Activated CD4-positive, alpha-beta T cell treated with anti-CD3 and anti-CD28 coated beads for 36 hours (primary cell): ENCODE measurements at regions of chr22 and their contacts with region 1.

Region 1: GRCh38 chr22:32796865-32797573 is 4.5 kb upstream of the TIMP3 start:
- DNase-seq: peak; percentile 81
- ATAC-seq: peak; percentile 95
- H3K4me3 Mint-ChIP-seq: no peak overlapping the region
- H3K27ac Mint-ChIP-seq: no peak overlapping the region
- H3K4me1 Mint-ChIP-seq: peaks cover 2% of the 10 kb centered on the region
- H3K27me3 Mint-ChIP-seq: peaks cover 37% of the 10 kb centered on the region

Region 2: DNA sequence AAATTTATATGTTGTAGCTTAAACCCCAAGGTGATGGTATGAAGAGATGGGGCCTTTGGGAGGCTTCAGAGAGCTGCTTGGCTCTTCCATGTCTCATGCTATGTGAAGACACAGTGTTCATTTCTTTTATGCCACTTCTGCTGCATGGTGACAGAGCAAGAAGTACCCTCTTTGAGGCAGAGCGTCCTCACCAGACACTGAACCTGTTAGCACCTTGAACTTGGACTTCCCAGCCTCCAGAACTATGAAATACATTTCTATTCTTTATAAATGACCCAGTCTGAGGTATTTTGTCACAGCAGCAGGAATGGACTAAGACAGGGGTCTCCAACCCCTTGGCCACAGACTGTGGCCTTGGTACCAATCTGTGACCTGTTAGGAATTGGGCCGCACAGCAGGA is 142.0 kb before region 1 on chr22:
- CTCF ChIA-PET with region 1: interaction called, 106 read pairs
- POLR2A ChIA-PET with region 1: interaction called, 3 read pairs
- intact Hi-C with region 1: loop called (anchors 1 kb)
- DNase-seq: no peak
- ATAC-seq: no peak
- H3K4me3 Mint-ChIP-seq: no peak overlapping the region
- H3K27ac Mint-ChIP-seq: no peak overlapping the region
- H3K4me1 Mint-ChIP-seq: no peaks in the 10 kb centered on the region
- H3K27me3 Mint-ChIP-seq: peaks cover 10% of the 10 kb centered on the region

Region 3: GRCh38 chr22:32660292-32660691 is 136.7 kb before region 1 on chr22:
- CTCF ChIA-PET with region 1: interaction called, 106 read pairs
- POLR2A ChIA-PET with region 1: interaction called, 3 read pairs
- intact Hi-C with region 1: loop called (anchors 1 kb)
- DNase-seq: peak; percentile 74
- ATAC-seq: peak; percentile 30
- H3K4me3 Mint-ChIP-seq: no peak overlapping the region
- H3K27ac Mint-ChIP-seq: no peak overlapping the region
- H3K4me1 Mint-ChIP-seq: no peaks in the 10 kb centered on the region
- H3K27me3 Mint-ChIP-seq: peaks cover 10% of the 10 kb centered on the region

Region 4: GRCh38 chr22:32810561-32811004 is 13.6 kb after region 1 on chr22:
- CTCF ChIA-PET with region 1: interaction called, 12 read pairs
- POLR2A ChIA-PET with region 1: no interaction called
- intact Hi-C with region 1: no loop called
- DNase-seq: no peak
- ATAC-seq: no peak
- H3K4me3 Mint-ChIP-seq: no peak overlapping the region
- H3K27ac Mint-ChIP-seq: no peak overlapping the region
- H3K4me1 Mint-ChIP-seq: no peaks in the 10 kb centered on the region
- H3K27me3 Mint-ChIP-seq: peaks cover 10% of the 10 kb centered on the region

Region 5: DNA sequence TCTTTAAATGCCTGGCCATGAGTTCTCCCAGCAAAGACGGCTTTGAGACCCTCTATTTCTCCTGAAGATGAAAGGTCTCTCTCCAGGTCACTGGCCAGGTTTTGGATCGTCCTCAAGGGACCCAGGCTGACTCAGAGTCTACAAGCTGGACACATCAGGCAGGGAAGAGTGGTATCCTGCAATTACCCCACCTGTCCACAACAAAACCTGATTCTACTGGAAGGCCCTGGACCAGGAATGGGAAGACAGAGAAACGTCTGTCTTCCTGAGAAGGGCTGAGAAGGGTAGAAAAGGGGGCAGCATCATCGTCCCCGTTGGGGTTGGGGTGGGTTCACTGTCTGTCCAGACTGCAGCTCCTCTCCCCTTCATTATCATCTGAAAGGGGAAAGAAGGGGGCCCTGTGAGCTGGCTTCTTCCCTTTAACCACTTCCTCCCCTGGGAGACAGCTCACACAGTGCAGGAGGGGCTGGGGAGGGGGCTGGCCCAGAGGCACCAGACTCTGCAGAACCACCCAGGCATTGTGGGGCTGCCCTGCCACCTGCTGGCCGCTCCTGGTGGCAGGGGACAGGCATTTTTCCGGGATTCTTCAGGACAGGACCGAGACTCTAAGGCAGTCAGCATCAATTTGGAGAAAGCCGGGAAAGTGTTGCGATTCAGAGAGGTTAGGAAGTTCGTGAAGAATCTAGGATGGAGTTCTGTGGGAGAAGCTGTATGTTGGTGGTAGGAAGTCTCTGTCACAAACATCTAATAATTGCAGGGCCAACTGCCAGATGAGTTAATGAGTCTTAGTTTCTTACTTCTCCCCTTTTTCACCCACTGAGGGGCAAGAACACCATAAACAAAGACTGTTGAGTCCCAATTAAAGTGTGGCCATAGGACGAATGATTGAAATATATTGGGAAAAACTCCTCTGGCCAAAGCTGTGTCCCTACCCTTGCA is 203.6 kb after region 1 on chr22:
- CTCF ChIA-PET with region 1: no interaction called
- POLR2A ChIA-PET with region 1: no interaction called
- intact Hi-C with region 1: loop called in 1 of 2 experiments (anchors 2 kb)
- DNase-seq: peak; percentile 64
- ATAC-seq: no peak
- H3K4me3 Mint-ChIP-seq: no peak overlapping the region
- H3K27ac Mint-ChIP-seq: no peak overlapping the region
- H3K4me1 Mint-ChIP-seq: no peaks in the 10 kb centered on the region
- H3K27me3 Mint-ChIP-seq: no peaks in the 10 kb centered on the region